HepG2 (cell line): ENCODE measurements at regions of chr6 and their contacts with region 1.

Region 1: DNA sequence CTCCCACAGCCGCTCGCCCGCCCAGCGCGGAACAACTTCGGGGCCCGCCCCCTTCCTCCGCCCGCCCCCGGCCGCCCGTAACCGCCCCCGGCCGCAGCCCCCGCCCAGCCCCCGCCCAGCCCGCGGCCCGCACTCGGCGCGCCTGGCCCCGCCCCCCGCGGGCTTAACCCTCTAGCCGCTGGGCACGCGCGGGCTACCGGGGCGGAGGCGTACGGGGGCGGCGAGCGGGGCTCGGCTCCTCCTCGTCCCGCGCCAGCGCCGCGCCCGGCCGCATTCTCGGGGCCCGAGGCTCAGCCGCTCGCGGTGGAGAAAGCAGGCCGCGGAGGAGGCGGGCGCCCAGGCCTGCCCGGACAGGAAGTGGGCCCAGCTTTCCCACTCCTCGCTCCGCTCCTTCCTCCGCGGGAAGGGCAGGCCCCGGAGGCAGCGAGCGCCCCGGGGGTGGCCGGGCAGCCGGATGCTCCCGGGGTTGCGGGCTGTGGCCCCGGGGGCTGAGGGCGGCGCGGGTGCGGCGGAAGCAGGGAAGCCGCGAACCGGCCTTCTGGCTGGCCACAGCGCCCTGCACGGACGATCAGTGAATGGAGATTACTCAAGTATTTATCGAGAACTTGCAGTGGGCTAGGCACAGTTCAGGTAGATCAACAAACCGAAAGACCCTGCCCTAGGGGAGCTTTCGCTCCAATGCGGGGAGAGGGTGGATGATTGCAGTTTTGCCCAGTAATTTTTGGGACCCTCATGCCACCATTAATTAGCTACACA is at the start of gene TRAM2:
- DNase-seq: peak; percentile 76
- ATAC-seq: peak; percentile 82
- H3K4me3 ChIP-seq: peak within 1 kb of the TSS; percentile 85 to 97 (median 89)
- H3K27ac ChIP-seq: peak within 1 kb of the TSS; percentile 95
- H3K4me1 ChIP-seq: peaks cover 54% of the 10 kb centered on the region
- H3K27me3 ChIP-seq: no peaks in the 10 kb centered on the region; a peak in 1 of 5 replicates
- CTCF ChIP-seq: peak; percentile 43
- EP300 ChIP-seq: peak; percentile 21 to 55; a peak in 1 of 4 replicates
- POLR2A ChIP-seq: peak; percentile 57 to 87
- RAD21 ChIP-seq: peak; percentile 82
- total RNA-seq, gene TRAM2: 40.5 and 49.1 TPM in 2 replicates

Region 2: DNA sequence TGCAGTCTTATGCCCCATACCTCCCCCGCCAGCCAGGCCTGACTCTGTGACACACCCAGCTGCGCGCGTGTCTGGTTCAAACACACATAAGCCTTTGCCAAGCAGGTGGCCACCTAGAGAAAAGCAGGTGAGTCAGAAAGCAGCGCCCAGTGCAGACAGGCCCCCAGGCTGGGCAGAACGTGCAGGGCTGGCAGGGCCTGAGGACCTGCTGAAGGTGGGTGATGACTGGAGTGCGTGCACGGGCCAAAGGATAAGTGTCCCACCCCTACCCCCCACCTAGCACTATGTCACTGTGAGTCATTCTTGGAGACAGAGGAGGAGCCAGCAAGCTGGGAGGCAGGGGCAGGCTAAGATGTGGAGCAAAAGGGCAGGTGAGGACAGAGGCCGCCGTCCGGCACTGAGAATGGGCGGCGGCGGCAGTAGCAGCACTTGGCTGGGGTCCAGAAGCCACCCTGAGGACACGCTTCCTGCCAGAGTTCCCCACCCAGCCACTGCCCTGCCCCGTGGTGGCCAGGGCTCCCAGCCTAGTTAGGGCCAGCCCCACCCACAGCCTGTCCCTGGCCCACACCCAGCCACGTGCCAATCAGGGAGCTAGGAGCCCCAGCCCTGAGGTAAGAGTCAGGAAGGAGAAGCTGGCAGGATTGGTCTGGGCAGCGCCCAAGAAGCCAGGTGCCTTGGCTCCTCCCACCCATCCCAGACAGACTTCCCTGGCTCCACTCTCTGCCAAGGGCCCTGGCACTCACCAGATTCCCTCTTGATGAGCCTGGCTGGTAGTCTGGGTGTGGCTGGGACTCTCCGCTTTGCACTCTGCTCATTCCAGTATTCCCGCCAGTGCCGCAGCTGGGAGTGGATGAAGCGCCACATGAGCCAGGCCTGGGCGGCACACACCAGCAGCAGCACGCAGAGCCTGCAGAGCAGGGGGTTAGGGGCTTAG is 73.1 kb before region 1 on chr6:
- CTCF ChIA-PET with region 1: no interaction called
- POLR2A ChIA-PET with region 1: no interaction called
- in situ Hi-C with region 1: no loop called
- intact Hi-C with region 1: loop called (anchors 5 kb)
- DNase-seq: no peak
- ATAC-seq: peak; percentile 8
- H3K4me3 ChIP-seq: no peak overlapping the region
- H3K27ac ChIP-seq: no peak overlapping the region
- H3K4me1 ChIP-seq: peaks cover 25% of the 10 kb centered on the region
- H3K27me3 ChIP-seq: no peaks in the 10 kb centered on the region
- CTCF ChIP-seq: no peak
- EP300 ChIP-seq: no peak
- POLR2A ChIP-seq: no peak
- RAD21 ChIP-seq: no peak

Region 3: DNA sequence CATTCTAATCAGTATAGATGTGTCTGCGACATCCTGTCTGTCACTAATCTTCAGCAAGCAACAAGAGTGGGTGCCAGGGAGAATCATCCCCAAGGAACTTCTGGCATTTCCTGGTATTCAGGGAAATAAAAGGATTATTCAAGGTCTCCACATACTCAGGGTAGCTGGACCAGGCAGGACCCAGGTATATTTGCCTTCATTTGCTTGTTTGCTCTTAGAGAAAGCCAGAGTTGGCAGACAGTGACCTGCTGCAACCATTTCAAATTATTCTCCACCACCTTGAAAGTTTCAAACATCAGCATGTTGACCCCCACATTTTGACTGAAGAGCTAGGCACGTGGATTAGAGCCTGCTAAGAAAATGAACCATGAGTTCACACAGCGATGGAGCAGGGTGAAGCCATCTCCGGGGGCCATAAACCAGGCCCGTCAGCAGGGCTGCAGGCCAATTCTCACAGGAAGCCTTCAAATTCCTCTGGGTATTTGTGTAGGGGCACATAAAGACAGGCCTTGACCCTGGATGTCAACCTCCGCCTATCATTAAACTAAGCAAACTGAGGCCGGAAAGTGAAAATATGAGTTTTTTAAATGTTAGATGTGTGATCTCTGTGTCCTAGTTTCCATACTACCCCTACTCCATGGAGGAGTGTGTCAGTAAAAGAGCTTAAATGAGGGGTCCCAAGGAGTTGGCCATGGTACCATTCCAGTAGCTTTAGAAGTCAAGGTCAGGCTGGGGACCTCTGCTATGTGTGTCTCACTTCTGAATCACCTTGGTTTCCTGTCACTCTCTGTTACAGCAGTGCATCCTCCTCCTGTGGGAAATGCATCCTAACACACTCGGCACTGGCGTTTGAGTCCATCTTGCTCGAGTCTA is 33.2 kb before region 1 on chr6:
- CTCF ChIA-PET with region 1: no interaction called
- POLR2A ChIA-PET with region 1: interaction called, 36 read pairs
- in situ Hi-C with region 1: no loop called
- intact Hi-C with region 1: loop called (anchors 2 kb)
- DNase-seq: peak; percentile 87
- ATAC-seq: peak; percentile 66
- H3K4me3 ChIP-seq: peak overlapping the region; percentile 1 to 31 (median 30); a peak in 5 of 6 replicates
- H3K27ac ChIP-seq: peak overlapping the region; percentile 77
- H3K4me1 ChIP-seq: peaks cover 100% of the 10 kb centered on the region
- H3K27me3 ChIP-seq: no peaks in the 10 kb centered on the region
- CTCF ChIP-seq: no peak
- EP300 ChIP-seq: peak in 1 of 2 experiments; percentile 93; a peak in 2 of 4 replicates
- POLR2A ChIP-seq: 0 out of 4 replicates have a peak, but pooled peaks of 1 of the 2 experiments have one; percentile 24
- RAD21 ChIP-seq: no peak

Region 4: GRCh38 chr6:52566853-52567279 is 10.3 kb before region 1 on chr6:
- CTCF ChIA-PET with region 1: no interaction called
- POLR2A ChIA-PET with region 1: interaction called, 14 read pairs
- in situ Hi-C with region 1: no loop called
- intact Hi-C with region 1: no loop called
- DNase-seq: peak; percentile 58
- ATAC-seq: peak; percentile 63
- H3K4me3 ChIP-seq: no peak overlapping the region
- H3K27ac ChIP-seq: no peak overlapping the region
- H3K4me1 ChIP-seq: peaks cover 97% of the 10 kb centered on the region
- H3K27me3 ChIP-seq: no peaks in the 10 kb centered on the region
- CTCF ChIP-seq: no peak
- EP300 ChIP-seq: 0 out of 4 replicates have a peak, but pooled peaks of 1 of the 2 experiments have one; percentile 17
- POLR2A ChIP-seq: no peak
- RAD21 ChIP-seq: no peak

Region 5: DNA sequence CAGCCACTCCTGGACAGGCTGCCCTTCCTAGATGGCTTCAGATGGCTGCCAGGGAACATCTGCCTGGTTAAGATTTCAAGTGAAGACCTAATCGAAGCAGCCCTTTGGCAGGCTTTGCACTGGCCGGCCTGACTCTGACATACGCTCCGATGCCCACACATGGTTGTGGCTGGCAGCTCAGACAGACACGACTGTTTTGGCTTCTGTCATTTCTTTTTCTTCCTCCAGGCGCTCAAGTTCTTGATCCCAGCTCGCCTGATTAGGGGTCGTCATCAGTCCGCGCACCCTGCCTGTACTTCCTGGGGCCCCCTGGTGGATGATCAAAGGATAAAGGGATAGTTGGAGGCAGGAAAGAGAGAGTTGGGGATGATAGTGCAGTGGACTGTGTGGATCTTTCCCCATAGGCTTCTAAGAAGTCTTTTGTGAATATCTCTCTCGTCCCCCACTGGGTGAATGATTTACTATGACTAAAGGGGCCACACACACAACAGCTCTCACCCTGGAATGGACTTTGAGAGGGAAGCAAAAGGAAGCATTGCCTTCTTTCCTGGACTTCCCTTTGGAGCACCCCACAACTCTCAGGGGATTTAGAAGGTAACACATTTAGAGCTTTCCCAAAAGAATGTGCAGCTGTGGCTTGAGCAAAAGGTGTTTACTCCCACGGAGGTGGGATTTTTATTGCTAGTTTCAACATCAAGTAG is 21.1 kb after region 1 on chr6:
- CTCF ChIA-PET with region 1: interaction called, 48 read pairs
- POLR2A ChIA-PET with region 1: interaction called, 133 read pairs
- in situ Hi-C with region 1: no loop called
- intact Hi-C with region 1: loop called (anchors 1 kb)
- DNase-seq: peak; percentile 100
- ATAC-seq: peak; percentile 92
- H3K4me3 ChIP-seq: peak overlapping the region; percentile 42 to 73 (median 52); a peak in 5 of 6 replicates
- H3K27ac ChIP-seq: peak overlapping the region; percentile 98
- H3K4me1 ChIP-seq: peaks cover 81% of the 10 kb centered on the region
- H3K27me3 ChIP-seq: no peaks in the 10 kb centered on the region
- CTCF ChIP-seq: peak; percentile 96
- EP300 ChIP-seq: peak; percentile 77 to 91
- POLR2A ChIP-seq: peak; percentile 57 to 95; a peak in 3 of 4 replicates
- RAD21 ChIP-seq: peak; percentile 91